HAP-1 (cell line): ENCODE measurements at regions of chr16 and their contacts with region 1.

Region 1: DNA sequence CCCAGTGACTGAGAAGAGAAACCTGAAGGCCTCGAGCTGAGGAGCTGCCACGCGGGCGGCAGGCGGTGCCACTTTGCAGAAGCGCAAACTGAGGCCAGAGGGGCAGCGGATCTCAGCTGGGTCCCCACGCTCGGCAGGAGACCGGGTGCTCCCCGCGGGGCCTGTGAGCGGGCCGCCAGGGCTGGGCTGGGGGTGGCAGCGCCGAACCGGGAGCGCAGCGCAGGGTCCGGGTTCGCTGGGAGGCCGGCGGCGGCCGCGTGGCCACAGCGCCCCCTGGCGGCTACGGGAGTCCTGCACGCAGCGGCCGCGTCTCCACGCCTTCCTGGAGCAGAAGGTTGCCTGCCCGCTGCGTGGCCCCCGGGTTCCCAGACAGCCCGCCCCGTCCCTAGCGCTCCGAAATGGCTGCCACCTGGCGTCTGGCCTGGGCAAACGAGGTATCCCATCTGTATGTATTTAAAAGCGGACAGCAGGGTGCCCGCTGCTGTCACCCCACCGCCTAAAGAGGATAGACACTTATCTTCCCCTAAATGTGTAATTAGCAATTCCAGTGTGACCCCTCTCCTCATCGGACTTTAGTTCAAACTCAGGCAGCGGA is 96.1 kb upstream of the CDH5 start:
- DNase-seq: peak; percentile 57 to 81
- H3K4me3 ChIP-seq: no peak overlapping the region
- H3K4me1 ChIP-seq: no peaks in the 10 kb centered on the region
- H3K27me3 ChIP-seq: no peaks in the 10 kb centered on the region

Region 2: GRCh38 chr16:66135421-66135831 is 135.0 kb before region 1 on chr16:
- in situ Hi-C with region 1: loop called (anchors 10 kb)
- DNase-seq: no peak
- H3K4me3 ChIP-seq: no peak overlapping the region
- H3K4me1 ChIP-seq: no peaks in the 10 kb centered on the region
- H3K27me3 ChIP-seq: peaks cover 1% of the 10 kb centered on the region